GM12878 (cell line): ENCODE measurements at regions of chr14 and their contacts with region 1.

Region 1: DNA sequence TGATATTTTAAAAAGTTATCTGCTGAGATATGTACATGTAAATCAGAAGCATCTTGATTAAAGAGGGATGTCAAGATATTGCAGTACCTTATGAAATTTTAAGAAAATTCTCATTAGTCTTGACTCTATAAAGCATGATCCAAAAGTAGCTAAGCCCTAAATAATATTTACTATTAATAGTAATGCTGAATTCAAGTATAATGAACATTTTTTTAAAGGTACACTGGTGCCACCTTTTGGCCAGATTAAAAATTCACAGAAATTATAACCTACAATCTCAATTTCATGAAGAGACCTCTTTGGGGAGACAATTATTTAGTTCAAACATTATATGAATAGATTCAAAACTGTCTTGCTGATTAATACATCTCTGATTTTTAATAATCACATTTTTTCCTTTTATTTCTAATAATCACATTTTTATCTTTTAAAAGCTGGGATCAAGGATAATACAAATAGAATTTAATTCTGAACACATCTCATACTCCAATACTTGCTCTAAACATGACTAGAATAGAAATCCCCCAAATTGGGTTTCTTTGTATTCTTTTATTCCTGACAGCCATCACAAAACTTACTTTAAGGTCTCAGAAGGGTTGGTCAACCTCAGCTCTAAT is 13.4 kb downstream of the AKAP5 start:
- DNase-seq: no peak
- ATAC-seq: peak; percentile 39; the same call in 1 of the 3 replicates
- H3K4me3 ChIP-seq: no peak overlapping the region
- H3K27ac ChIP-seq: no peak overlapping the region
- H3K4me1 ChIP-seq: peaks cover 7% of the 10 kb centered on the region
- H3K27me3 ChIP-seq: no peaks in the 10 kb centered on the region
- CTCF ChIP-seq: peak in 2 of 3 experiments; percentile 33 to 54; a peak in 3 of 6 replicates
- EP300 ChIP-seq: no peak
- POLR2A ChIP-seq: no peak
- RAD21 ChIP-seq: peak; percentile 57

Region 2: GRCh38 chr14:64218344-64219240 is 260.1 kb before region 1 on chr14:
- CTCF ChIA-PET with region 1: no interaction called
- POLR2A ChIA-PET with region 1: no interaction called
- RAD21 ChIA-PET with region 1: no interaction called
- SMC1A ChIA-PET with region 1: no interaction called
- in situ Hi-C with region 1: no loop called
- intact Hi-C with region 1: no loop called
- DNase-seq: no peak
- ATAC-seq: peak; percentile 75
- H3K4me3 ChIP-seq: peak overlapping the region; percentile 15; the same call in 1 of the 2 replicates
- H3K27ac ChIP-seq: peak overlapping the region; percentile 54
- H3K4me1 ChIP-seq: peaks cover 30% of the 10 kb centered on the region
- H3K27me3 ChIP-seq: no peaks in the 10 kb centered on the region
- CTCF ChIP-seq: no peak
- EP300 ChIP-seq: 0 out of 4 replicates have a peak, but pooled peaks of 1 of the 2 experiments have one; percentile 8
- POLR2A ChIP-seq: no peak
- RAD21 ChIP-seq: no peak

Region 3: GRCh38 chr14:64421166-64421565 is 57.6 kb before region 1 on chr14:
- CTCF ChIA-PET with region 1: interaction called, 244 read pairs
- POLR2A ChIA-PET with region 1: no interaction called
- RAD21 ChIA-PET with region 1: interaction called, 5 read pairs
- SMC1A ChIA-PET with region 1: interaction called, 12 read pairs
- in situ Hi-C with region 1: no loop called
- intact Hi-C with region 1: no loop called
- DNase-seq: no peak
- ATAC-seq: no peak
- H3K4me3 ChIP-seq: no peak overlapping the region
- H3K27ac ChIP-seq: no peak overlapping the region
- H3K4me1 ChIP-seq: peaks cover 3% of the 10 kb centered on the region; the same call in 1 of the 2 replicates
- H3K27me3 ChIP-seq: no peaks in the 10 kb centered on the region
- CTCF ChIP-seq: no peak
- EP300 ChIP-seq: no peak
- POLR2A ChIP-seq: no peak
- RAD21 ChIP-seq: no peak

Region 4: GRCh38 chr14:64444984-64445845 is 33.5 kb before region 1 on chr14:
- CTCF ChIA-PET with region 1: interaction called, 9 read pairs
- POLR2A ChIA-PET with region 1: interaction called, 7 read pairs
- RAD21 ChIA-PET with region 1: interaction called, 7 read pairs
- SMC1A ChIA-PET with region 1: interaction called, 14 read pairs
- in situ Hi-C with region 1: no loop called
- intact Hi-C with region 1: no loop called
- DNase-seq: peak; percentile 84
- ATAC-seq: peak; percentile 99
- H3K4me3 ChIP-seq: no peak overlapping the region
- H3K27ac ChIP-seq: peak overlapping the region; percentile 97
- H3K4me1 ChIP-seq: peaks cover 22% of the 10 kb centered on the region
- H3K27me3 ChIP-seq: no peaks in the 10 kb centered on the region
- CTCF ChIP-seq: peak in 2 of 3 experiments; percentile 15 to 20; a peak in 1 of 6 replicates
- EP300 ChIP-seq: peak; percentile 75 to 77; a peak in 2 of 4 replicates
- POLR2A ChIP-seq: peak; percentile 37; the same call in 1 of the 2 replicates
- RAD21 ChIP-seq: no peak

Region 5: GRCh38 chr14:64496764-64497163 is 18.0 kb after region 1 on chr14:
- CTCF ChIA-PET with region 1: interaction called, 33 read pairs
- POLR2A ChIA-PET with region 1: interaction called, 6 read pairs
- RAD21 ChIA-PET with region 1: interaction called, 6 read pairs
- SMC1A ChIA-PET with region 1: interaction called, 51 read pairs
- in situ Hi-C with region 1: no loop called
- intact Hi-C with region 1: no loop called
- DNase-seq: no peak
- ATAC-seq: peak; percentile 10; the same call in 2 of the 3 replicates
- H3K4me3 ChIP-seq: no peak overlapping the region
- H3K27ac ChIP-seq: no peak overlapping the region
- H3K4me1 ChIP-seq: 0 out of 2 replicates have a peak, but pooled peaks cover 3% of the 10 kb centered on the region
- H3K27me3 ChIP-seq: no peaks in the 10 kb centered on the region
- CTCF ChIP-seq: no peak
- EP300 ChIP-seq: no peak
- POLR2A ChIP-seq: no peak
- RAD21 ChIP-seq: no peak

Region 6: DNA sequence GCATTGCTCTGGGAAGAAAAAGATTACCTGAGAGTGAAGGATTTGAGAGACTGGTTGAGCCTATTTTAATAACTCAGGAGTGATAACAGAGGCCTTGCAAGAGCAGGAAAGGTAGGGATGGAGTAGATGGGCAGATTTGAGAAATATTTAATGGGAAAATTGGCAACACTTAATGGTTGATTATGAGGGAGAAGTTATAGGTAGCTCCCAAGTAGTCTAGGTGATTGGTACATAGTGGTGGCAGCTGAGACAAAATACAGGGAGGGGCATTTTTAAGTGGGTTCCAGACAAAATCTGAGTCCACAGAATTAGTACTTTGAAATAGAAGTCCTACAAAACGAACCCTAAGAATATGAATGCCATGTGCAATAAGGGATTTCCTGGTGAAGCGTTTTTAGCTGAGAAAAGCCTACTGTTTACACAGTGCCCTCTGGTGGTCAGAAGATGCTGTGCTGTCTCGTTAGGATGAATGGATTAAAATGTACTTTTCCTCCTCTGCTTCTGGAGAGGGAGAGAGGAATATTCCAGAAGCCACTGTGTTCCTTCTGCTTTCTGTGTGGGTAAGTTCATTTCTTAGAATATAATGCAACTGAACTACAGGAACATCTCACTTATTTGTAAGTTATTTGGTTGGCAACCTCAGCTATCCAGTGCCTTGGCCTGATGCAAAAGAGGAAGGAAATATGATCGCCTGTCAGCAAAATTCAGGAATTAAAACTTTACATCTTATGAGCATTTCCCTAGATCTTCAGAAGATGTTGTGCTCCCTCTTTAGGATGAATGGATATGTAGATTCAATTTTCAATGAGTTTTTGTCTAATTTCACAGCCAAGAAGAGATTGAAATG is 32.3 kb after region 1 on chr14:
- CTCF ChIA-PET with region 1: interaction called, 36 read pairs
- POLR2A ChIA-PET with region 1: interaction called, 8 read pairs
- RAD21 ChIA-PET with region 1: interaction called, 10 read pairs
- SMC1A ChIA-PET with region 1: interaction called, 40 read pairs
- in situ Hi-C with region 1: no loop called
- intact Hi-C with region 1: no loop called
- DNase-seq: no peak
- ATAC-seq: peak; percentile 50
- H3K4me3 ChIP-seq: peak overlapping the region; percentile 40; the same call in 1 of the 2 replicates
- H3K27ac ChIP-seq: peak overlapping the region; percentile 68
- H3K4me1 ChIP-seq: peaks cover 25% of the 10 kb centered on the region
- H3K27me3 ChIP-seq: no peaks in the 10 kb centered on the region
- CTCF ChIP-seq: peak; percentile 82 to 95 (median 84)
- EP300 ChIP-seq: no peak
- POLR2A ChIP-seq: no peak
- RAD21 ChIP-seq: peak; percentile 68